ENCODE measurements at regions of chr1 and their contacts with region 1.

Region 1: DNA sequence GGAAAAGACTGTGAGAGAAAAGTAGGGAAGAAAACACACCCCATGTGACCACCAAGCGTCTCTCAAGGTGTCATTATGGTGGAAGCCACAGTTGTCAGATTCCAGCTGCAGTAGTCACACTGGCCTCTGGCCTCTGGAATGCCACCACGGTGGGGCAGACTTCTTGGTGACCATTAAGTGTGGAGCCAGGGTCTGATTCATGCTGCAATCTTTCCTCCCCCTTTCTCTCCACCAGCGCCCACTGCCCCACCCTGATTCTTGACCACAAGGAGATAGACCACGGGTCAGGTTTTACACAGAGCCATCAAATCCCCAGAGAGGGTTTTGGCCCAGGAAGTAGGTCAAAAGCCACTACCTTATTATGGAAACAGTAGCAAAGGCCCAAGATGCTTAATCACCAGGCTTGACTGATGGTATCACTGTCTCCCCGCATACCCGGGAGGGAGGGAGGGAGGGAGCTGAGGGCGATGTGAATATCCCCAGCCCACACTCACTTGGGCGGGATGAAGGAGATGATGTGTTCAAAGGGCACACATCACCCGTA is 52.7 kb upstream of the GRHL3 start:
- DNase-seq: peak; percentile 99
- ATAC-seq: peak; percentile 91
- H3K4me3 ChIP-seq: no peak overlapping the region
- H3K27ac ChIP-seq: peak overlapping the region; percentile 84
- H3K4me1 ChIP-seq: peaks cover 20% of the 10 kb centered on the region
- H3K27me3 ChIP-seq: no peaks in the 10 kb centered on the region
- CTCF ChIP-seq: peak; percentile 50

Region 2: GRCh38 chr1:24235921-24236781 is 30.3 kb before region 1 on chr1:
- CTCF ChIA-PET with region 1: no interaction called
- POLR2A ChIA-PET with region 1: no interaction called
- intact Hi-C with region 1: loop called (anchors 2 kb)
- DNase-seq: peak; percentile 58
- ATAC-seq: peak; percentile 69
- H3K4me3 ChIP-seq: no peak overlapping the region
- H3K27ac ChIP-seq: peak overlapping the region; percentile 55
- H3K4me1 ChIP-seq: peaks cover 19% of the 10 kb centered on the region
- H3K27me3 ChIP-seq: no peaks in the 10 kb centered on the region
- CTCF ChIP-seq: no peak

Region 3: DNA sequence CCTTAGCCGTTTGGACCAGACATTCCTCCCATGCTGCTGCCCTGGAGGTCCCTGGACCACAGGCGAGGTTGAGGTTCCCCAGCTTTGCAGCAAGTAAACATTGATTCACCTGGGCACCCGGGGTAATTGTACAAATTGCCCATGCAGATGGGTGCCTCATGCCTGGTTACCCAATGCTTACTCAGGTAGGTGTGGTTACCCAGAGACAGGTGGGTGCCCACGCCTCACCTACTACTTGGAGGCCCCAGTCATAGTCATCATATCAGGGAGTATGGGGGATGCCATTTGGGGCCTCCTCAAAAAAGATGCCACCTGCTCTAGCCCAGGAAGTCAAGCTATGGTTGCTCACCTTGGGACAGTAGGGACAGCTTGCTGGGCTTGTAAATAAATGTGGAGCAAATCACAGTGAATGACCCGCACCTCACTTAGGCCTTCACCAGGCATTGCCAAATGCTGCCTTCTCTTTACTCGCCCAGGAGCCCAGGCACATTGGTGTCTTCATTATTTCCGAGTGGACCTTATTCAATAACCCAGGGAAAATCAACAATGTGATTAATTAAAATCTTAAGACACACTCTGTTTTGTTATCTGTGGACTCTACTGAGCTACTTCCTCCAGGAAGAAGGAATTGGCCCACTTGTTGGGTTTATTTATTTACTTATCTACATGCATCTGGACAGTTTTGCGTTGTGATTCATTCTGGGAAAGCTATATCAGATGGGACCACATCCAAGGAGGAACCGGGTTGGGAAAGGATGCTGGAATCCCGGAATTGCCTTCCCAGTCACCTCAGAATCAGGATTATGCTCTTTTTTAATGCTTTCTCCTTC is 17.1 kb after region 1 on chr1:
- CTCF ChIA-PET with region 1: interaction called, 4 read pairs
- POLR2A ChIA-PET with region 1: interaction called, 6 read pairs
- intact Hi-C with region 1: loop called (anchors 1 kb)
- DNase-seq: peak; percentile 98
- ATAC-seq: peak; percentile 81
- H3K4me3 ChIP-seq: peak overlapping the region; percentile 44
- H3K27ac ChIP-seq: peak overlapping the region; percentile 98
- H3K4me1 ChIP-seq: peaks cover 47% of the 10 kb centered on the region
- H3K27me3 ChIP-seq: no peaks in the 10 kb centered on the region
- CTCF ChIP-seq: no peak

Region 4: DNA sequence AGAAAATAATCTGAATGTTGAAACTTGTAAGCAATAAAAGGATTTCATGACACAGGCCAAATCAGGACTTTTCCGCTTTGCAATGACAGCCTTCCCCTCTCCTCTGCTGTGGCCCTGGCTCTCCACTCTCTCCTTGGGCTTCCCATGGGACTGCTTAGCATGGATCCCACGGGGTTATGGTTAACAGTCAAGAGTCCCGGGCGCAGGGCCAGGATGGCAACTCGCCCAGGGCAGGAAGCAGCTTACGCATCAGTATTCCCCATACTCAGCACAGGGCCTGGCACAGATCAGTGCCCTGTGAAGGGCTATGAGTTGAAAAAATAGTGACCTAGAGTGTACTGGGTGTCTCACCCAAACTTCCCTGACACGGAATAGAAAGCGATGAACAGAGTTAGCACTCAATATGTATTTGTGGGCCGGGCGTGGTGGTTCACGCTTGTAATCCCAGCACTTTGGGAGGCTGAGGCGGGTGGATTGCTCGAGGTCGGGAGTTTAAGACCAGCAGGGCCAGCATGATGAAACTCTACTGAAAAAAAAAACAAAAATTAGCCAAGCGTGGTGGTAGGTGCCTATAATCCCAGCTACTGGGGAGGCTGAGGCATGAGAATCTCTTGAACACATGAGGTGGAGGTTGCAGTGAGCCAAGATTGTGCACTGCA is 23.6 kb after region 1 on chr1:
- CTCF ChIA-PET with region 1: interaction called, 3 read pairs
- POLR2A ChIA-PET with region 1: interaction called, 3 read pairs
- intact Hi-C with region 1: loop called (anchors 1 kb)
- DNase-seq: peak; percentile 95
- ATAC-seq: peak; percentile 57
- H3K4me3 ChIP-seq: no peak overlapping the region
- H3K27ac ChIP-seq: peak overlapping the region; percentile 76
- H3K4me1 ChIP-seq: peaks cover 62% of the 10 kb centered on the region
- H3K27me3 ChIP-seq: no peaks in the 10 kb centered on the region
- CTCF ChIP-seq: no peak